B cell (primary cell): ENCODE measurements at regions of chr15 and their contacts with region 1.

Region 1: GRCh38 chr15:59528965-59529402 is 82.6 kb upstream of the GCNT3 start:
- DNase-seq: peak; percentile 82
- ATAC-seq: peak; percentile 69
- H3K4me3 ChIP-seq: no peak overlapping the region
- H3K4me3 Mint-ChIP-seq: no peak overlapping the region
- H3K27ac ChIP-seq: peak overlapping the region in 1 of 2 donors; percentile 30
- H3K27ac Mint-ChIP-seq: peak overlapping the region; percentile 54
- H3K4me1 ChIP-seq: peaks cover 18 to 33% of the 10 kb centered on the region in 2 donors
- H3K4me1 Mint-ChIP-seq: peaks cover 25% of the 10 kb centered on the region
- H3K27me3 ChIP-seq: no peaks in the 10 kb centered on the region
- H3K27me3 Mint-ChIP-seq: no peaks in the 10 kb centered on the region
- CTCF ChIP-seq: peak; percentile 86

Region 2: DNA sequence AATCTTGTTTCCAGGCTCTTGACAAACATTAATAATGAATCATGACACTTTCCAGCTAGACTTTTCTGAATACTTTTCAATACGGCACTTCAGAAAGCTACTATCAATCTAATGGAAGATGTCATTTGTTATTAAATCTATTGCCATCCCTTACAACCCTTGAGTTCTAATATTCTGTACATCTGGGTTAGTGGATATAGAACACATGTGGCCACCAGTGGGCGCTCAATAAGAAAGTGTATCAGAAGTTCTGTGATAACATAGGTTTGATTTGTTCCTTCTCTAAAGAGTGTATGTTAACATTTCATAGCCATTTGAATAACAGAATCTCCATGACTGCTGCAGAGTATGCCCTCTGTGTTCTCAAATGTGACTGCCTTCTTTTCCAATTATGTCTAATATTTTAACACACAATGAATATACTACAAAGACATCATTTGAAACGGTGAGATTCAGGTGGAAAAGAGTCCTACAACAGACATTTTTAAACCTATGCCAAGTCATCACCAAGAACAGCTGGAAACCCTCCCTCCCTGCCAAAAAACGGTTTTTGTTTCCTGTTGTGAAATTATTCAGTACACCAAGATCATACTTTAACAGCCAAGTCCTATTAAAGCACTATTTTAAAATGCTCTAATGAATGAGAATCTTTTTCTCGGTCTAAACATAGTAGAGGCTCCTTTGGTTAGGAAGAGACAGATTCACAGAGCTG is 1485.6 kb before region 1 on chr15:
- CTCF ChIA-PET with region 1: no interaction called
- POLR2A ChIA-PET with region 1: no interaction called
- intact Hi-C with region 1: loop called (anchors 10 kb)
- DNase-seq: peak; percentile 39
- ATAC-seq: no peak
- H3K4me3 ChIP-seq: no peak overlapping the region
- H3K4me3 Mint-ChIP-seq: no peak overlapping the region
- H3K27ac ChIP-seq: no peak overlapping the region
- H3K27ac Mint-ChIP-seq: no peak overlapping the region
- H3K4me1 ChIP-seq: no peaks in the 10 kb centered on the region
- H3K4me1 Mint-ChIP-seq: no peaks in the 10 kb centered on the region
- H3K27me3 ChIP-seq: peaks cover 0 to 2% (median 0%) of the 10 kb centered on the region in 4 experiments
- H3K27me3 Mint-ChIP-seq: peaks cover 37% of the 10 kb centered on the region
- CTCF ChIP-seq: peak; percentile 69

Region 3: GRCh38 chr15:58980351-58980939 is 548.5 kb before region 1 on chr15:
- CTCF ChIA-PET with region 1: interaction called, 26 read pairs
- POLR2A ChIA-PET with region 1: no interaction called
- intact Hi-C with region 1: no loop called
- DNase-seq: peak; percentile 63
- ATAC-seq: no peak
- H3K4me3 ChIP-seq: no peak overlapping the region
- H3K4me3 Mint-ChIP-seq: peak overlapping the region; percentile 67
- H3K27ac ChIP-seq: peak overlapping the region; percentile 70 to 75
- H3K27ac Mint-ChIP-seq: peak overlapping the region; percentile 98
- H3K4me1 ChIP-seq: peaks cover 50 to 59% of the 10 kb centered on the region in 2 donors
- H3K4me1 Mint-ChIP-seq: peaks cover 49% of the 10 kb centered on the region
- H3K27me3 ChIP-seq: no peaks in the 10 kb centered on the region
- H3K27me3 Mint-ChIP-seq: no peaks in the 10 kb centered on the region
- CTCF ChIP-seq: peak; percentile 79

Region 4: GRCh38 chr15:59456114-59456513 is 72.9 kb before region 1 on chr15:
- CTCF ChIA-PET with region 1: no interaction called
- POLR2A ChIA-PET with region 1: no interaction called
- intact Hi-C with region 1: no loop called
- DNase-seq: no peak
- ATAC-seq: no peak
- H3K4me3 ChIP-seq: no peak overlapping the region
- H3K4me3 Mint-ChIP-seq: no peak overlapping the region
- H3K27ac ChIP-seq: no peak overlapping the region
- H3K27ac Mint-ChIP-seq: no peak overlapping the region
- H3K4me1 ChIP-seq: no peaks in the 10 kb centered on the region
- H3K4me1 Mint-ChIP-seq: no peaks in the 10 kb centered on the region
- H3K27me3 ChIP-seq: no peaks in the 10 kb centered on the region
- H3K27me3 Mint-ChIP-seq: no peaks in the 10 kb centered on the region
- CTCF ChIP-seq: no peak

Region 5: DNA sequence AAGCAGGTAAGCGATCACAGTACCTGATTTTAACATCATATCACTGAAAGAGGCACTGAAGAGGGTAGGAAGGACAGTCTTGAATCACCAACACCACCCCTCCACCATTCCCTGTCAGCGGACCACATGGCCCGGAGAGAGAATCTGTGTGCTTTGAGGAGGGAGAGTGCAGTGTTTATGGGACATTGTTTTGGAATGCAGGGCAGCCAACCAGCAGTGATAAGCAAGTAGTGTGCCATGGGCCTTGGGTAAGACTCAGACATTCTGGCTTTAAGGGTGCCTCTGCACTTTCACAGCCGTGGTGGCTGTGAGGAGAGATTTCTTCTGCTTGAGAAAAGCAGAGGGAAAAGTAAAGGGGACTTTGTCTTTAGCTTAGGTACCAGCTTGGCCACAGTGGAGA is 44.6 kb before region 1 on chr15:
- CTCF ChIA-PET with region 1: interaction called, 11 read pairs
- POLR2A ChIA-PET with region 1: no interaction called
- intact Hi-C with region 1: no loop called
- DNase-seq: no peak
- ATAC-seq: no peak
- H3K4me3 ChIP-seq: no peak overlapping the region
- H3K4me3 Mint-ChIP-seq: no peak overlapping the region
- H3K27ac ChIP-seq: no peak overlapping the region
- H3K27ac Mint-ChIP-seq: no peak overlapping the region
- H3K4me1 ChIP-seq: peaks cover 13 to 15% of the 10 kb centered on the region in 2 donors
- H3K4me1 Mint-ChIP-seq: peaks cover 8% of the 10 kb centered on the region
- H3K27me3 ChIP-seq: no peaks in the 10 kb centered on the region
- H3K27me3 Mint-ChIP-seq: peaks cover 4% of the 10 kb centered on the region
- CTCF ChIP-seq: no peak

Region 6: DNA sequence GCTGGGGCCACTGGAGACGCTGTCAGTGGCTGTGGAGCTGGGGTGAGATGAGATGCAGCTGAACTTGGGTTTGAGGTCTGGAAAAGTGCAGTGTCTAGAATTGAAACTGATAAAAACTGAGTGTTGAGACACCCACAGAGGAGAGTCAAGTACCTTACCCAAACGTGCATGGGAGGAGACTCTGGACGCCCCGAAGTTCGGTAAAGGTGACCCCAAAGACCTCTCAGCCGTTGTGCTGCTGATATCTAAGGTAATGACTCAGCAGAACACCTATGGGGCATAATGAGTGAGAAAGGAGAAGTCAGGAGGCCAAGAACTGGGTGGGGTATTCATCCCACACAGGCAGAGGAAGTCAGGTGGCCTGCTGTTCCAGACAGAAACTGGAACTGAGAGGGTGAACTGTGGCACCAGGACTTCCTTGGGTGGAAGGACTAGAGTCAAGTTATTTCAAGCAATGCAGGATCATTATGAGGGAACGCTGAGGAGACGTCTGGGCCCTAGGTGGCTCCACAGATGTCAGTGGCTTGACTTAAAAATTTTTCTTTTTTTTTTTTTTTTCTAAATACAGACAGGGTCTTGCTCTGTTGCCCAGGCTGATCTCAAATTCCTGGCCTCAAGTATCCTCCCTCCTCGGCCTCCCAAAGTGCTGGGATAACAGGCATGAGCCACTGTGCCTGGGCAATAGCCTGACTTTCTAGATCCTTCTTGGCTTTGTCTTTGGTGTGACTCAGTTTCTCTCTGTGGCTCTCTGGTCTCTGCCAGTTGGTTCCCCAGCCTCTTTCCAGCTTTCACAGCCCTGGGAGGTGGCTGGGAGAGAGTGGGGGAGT is 14.9 kb after region 1 on chr15:
- CTCF ChIA-PET with region 1: interaction called, 20 read pairs
- POLR2A ChIA-PET with region 1: no interaction called
- intact Hi-C with region 1: no loop called
- DNase-seq: peak; percentile 62
- ATAC-seq: peak; percentile 74
- H3K4me3 ChIP-seq: peak overlapping the region in 1 of 5 experiments; percentile 42
- H3K4me3 Mint-ChIP-seq: peak overlapping the region; percentile 67
- H3K27ac ChIP-seq: no peak overlapping the region
- H3K27ac Mint-ChIP-seq: peak overlapping the region; percentile 79
- H3K4me1 ChIP-seq: peaks cover 14 to 21% of the 10 kb centered on the region in 2 donors
- H3K4me1 Mint-ChIP-seq: peaks cover 18% of the 10 kb centered on the region
- H3K27me3 ChIP-seq: no peaks in the 10 kb centered on the region
- H3K27me3 Mint-ChIP-seq: no peaks in the 10 kb centered on the region
- CTCF ChIP-seq: no peak

Region 7: DNA sequence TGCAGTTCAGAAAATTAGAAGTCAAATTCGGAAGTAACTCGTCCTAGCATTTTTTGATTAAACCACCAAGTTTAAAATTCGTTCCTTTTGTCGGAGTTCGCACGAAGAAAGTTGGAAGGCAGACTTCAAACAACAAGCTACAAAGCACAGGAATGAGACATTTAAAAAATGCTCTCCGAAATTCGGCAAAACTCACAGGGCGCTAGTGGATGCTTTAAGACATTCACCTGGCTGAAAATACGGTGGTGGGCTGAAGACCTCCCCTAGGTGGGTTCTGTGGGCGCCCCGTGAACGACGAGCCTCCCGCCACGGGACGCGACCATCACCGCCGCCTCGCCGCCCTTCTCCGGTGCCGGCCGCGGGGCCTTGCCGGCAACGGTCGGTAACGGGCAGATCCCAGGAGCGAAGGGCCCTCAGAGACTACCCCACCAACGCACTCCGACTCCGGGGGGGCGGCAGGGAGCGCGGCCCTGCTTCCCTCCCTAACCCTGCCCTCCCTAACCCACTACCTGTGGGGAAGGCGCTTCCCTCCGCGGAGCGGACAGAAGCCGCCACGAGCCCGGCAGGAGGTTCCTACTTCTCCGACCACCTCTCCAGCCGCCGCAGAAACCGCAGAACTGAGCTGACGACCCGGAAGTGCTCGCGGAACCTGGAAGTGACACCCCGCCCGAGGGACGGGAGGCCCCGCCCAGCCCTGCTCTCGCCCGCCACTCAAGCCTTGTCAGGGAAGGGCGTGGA is 128.1 kb after region 1 on chr15 and contains the start of gene GTF2A2:
- CTCF ChIA-PET with region 1: interaction called, 12 read pairs
- POLR2A ChIA-PET with region 1: no interaction called
- intact Hi-C with region 1: loop called (anchors 10 kb)
- DNase-seq: peak; percentile 95
- ATAC-seq: peak; percentile 99
- H3K4me3 ChIP-seq: peak within 1 kb of the TSS; percentile 74 to 94 (median 92)
- H3K4me3 Mint-ChIP-seq: no peak within 1 kb of the TSS
- H3K27ac ChIP-seq: peak within 1 kb of the TSS; percentile 64 to 79
- H3K27ac Mint-ChIP-seq: peak within 1 kb of the TSS; percentile 86
- H3K4me1 ChIP-seq: peaks cover 19 to 27% of the 10 kb centered on the region in 2 donors
- H3K4me1 Mint-ChIP-seq: peaks cover 12% of the 10 kb centered on the region
- H3K27me3 ChIP-seq: no peaks in the 10 kb centered on the region
- H3K27me3 Mint-ChIP-seq: no peaks in the 10 kb centered on the region
- CTCF ChIP-seq: no peak
- total RNA-seq, gene GTF2A2: 39.7 and 41.5 TPM in 2 replicates

Region 8: GRCh38 chr15:59741274-59741906 is 212.4 kb after region 1 on chr15:
- CTCF ChIA-PET with region 1: no interaction called
- POLR2A ChIA-PET with region 1: no interaction called
- intact Hi-C with region 1: no loop called
- DNase-seq: no peak
- ATAC-seq: no peak
- H3K4me3 ChIP-seq: no peak overlapping the region
- H3K4me3 Mint-ChIP-seq: no peak overlapping the region
- H3K27ac ChIP-seq: no peak overlapping the region
- H3K27ac Mint-ChIP-seq: no peak overlapping the region
- H3K4me1 ChIP-seq: peaks cover 0 to under 1% of the 10 kb centered on the region in 2 donors
- H3K4me1 Mint-ChIP-seq: no peaks in the 10 kb centered on the region
- H3K27me3 ChIP-seq: peaks cover 0 to 11% (median 0%) of the 10 kb centered on the region in 4 experiments
- H3K27me3 Mint-ChIP-seq: peaks cover 37% of the 10 kb centered on the region
- CTCF ChIP-seq: no peak